Activated B cell treated with CpG ODN at 0.5 μM for 24 hours (primary cell): ENCODE measurements at regions of chr19 and their contacts with region 1.

Region 1: GRCh38 chr19:48993175-48994034 is at the starts of genes GYS1 and RUVBL2:
- DNase-seq: peak; percentile 96
- ATAC-seq: peak; percentile 92
- H3K4me3 Mint-ChIP-seq: peak within 1 kb of the TSS; percentile 97
- H3K27ac Mint-ChIP-seq: peak within 1 kb of the TSS; percentile 97
- H3K4me1 Mint-ChIP-seq: peaks cover 33% of the 10 kb centered on the region
- H3K27me3 Mint-ChIP-seq: no peaks in the 10 kb centered on the region
- CTCF ChIP-seq: peak; percentile 94
- total RNA-seq, gene GYS1: 50.7 and 52.7 TPM in 2 replicates
- total RNA-seq, gene RUVBL2: 75.6 and 79.4 TPM in 2 replicates

Region 2: DNA sequence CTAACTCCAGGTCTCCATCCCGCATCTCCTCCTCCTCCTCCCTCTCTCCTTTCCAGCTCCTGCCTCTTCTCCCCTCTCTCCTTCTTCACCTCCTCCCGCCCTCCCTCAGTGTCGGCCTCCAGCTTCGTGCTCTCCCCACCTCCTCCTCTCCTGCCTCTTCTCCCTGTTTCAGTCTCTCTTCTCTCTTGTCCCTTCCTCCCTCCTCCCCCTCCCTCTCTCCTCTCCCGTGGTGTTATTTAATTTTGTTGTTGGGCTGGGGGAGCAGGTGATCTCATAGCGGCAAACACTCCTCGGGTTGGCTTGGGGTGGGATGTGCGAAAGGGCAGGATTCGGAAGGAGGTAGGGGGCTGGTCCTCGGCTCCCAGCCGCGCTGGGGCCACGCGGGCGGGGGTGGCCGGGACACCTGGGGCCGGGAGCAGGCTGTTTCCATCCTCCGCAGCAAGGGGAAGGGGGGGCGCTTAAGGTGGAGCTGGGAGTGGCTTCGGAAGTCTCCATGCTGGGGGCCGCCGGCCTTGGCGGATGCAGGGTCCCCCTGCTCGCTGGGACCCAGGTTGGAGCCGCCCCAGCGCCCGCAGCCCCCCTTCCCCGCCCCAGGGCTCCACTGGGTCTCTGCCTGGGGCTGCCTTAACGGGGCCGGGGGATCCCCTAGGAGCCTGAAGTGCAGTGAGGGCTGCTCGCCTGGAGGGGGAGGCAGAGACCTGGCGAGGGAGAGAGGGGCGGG is 347.2 kb before region 1 on chr19 and contains the start of gene CA11:
- CTCF ChIA-PET with region 1: no interaction called
- POLR2A ChIA-PET with region 1: interaction called, 4 read pairs
- intact Hi-C with region 1: loop called (anchors 2 kb)
- DNase-seq: peak; percentile 91
- ATAC-seq: peak; percentile 90
- H3K4me3 Mint-ChIP-seq: peak within 1 kb of the TSS; percentile 93
- H3K27ac Mint-ChIP-seq: peak within 1 kb of the TSS; percentile 92
- H3K4me1 Mint-ChIP-seq: peaks cover 50% of the 10 kb centered on the region
- H3K27me3 Mint-ChIP-seq: no peaks in the 10 kb centered on the region
- CTCF ChIP-seq: no peak
- total RNA-seq, gene CA11: 9.5 and 10.3 TPM in 2 replicates

Region 3: DNA sequence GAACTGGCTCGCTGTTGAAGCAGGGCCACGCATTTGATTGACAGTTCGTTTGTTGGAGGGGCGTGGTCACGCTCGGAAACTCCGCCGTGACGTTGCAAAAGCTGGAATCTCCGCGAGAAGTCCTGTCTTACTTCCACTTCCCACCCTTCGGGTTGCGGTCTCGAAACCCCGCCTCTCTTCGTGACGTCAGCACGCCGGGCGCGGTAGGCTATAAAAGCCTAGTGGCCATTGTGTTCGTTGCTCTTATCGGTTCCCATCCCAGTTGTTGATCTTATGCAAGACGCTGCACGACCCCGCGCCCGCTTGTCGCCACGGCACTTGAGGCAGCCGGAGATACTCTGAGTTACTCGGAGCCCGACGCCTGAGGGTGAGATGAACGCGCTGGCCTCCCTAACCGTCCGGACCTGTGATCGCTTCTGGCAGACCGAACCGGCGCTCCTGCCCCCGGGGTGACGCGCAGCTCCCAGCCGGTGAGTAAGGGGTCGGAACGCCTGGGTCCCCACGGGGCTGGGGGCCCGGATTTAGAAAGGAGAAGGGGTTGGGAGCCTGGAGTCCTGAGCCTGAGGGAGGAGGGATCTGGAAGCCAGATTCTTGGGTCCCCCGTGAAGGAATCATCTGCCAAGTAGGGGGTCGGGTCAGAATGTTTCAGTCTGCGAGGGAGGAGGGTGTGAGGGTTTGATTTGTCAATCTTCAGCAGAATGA is 121.1 kb before region 1 on chr19 and contains the start of gene PPP1R15A:
- CTCF ChIA-PET with region 1: no interaction called
- POLR2A ChIA-PET with region 1: interaction called, 51 read pairs
- intact Hi-C with region 1: loop called (anchors 1 kb)
- DNase-seq: peak; percentile 99
- ATAC-seq: peak; percentile 35
- H3K4me3 Mint-ChIP-seq: peak within 1 kb of the TSS; percentile 100
- H3K27ac Mint-ChIP-seq: peak within 1 kb of the TSS; percentile 100
- H3K4me1 Mint-ChIP-seq: peaks cover 42% of the 10 kb centered on the region
- H3K27me3 Mint-ChIP-seq: no peaks in the 10 kb centered on the region
- CTCF ChIP-seq: no peak
- total RNA-seq, gene PPP1R15A: 115 and 123 TPM in 2 replicates

Region 4: DNA sequence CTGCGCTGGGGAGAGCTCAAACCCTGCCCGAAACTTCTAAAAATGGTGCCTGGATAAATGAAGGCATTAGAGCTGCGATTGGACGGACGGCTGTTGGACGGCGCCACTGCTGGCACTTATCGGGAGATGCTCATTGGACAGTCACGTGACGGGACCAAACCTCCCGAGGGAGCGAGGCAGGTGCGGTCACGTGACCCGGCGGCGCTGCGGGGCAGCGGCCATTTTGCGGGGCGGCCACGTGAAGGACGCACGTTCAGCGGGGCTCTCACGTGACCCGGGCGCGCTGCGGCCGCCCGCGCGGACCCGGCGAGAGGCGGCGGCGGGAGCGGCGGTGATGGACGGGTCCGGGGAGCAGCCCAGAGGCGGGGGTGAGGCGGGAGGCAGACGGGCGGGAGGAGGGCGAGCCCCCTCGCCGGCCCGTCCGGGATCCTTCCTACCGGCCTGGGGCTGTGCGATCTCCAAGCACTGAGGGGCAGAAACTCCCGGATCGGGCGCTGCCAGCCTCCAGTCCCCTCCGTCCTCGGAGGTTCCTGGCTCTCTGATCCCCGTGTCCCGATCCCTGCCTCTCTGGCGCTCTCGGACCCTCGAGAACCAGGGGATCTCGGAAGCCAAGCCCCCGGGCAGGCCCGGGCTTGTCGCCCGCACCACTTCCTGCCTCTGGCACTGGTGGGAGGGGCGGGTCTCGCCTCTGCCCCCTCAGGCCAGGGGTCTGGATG is 38.7 kb before region 1 on chr19 and contains the start of gene BAX:
- CTCF ChIA-PET with region 1: no interaction called
- POLR2A ChIA-PET with region 1: interaction called, 7 read pairs
- intact Hi-C with region 1: loop called (anchors 2 kb)
- DNase-seq: peak; percentile 93
- ATAC-seq: peak; percentile 89
- H3K4me3 Mint-ChIP-seq: peak within 1 kb of the TSS; percentile 91
- H3K27ac Mint-ChIP-seq: peak within 1 kb of the TSS; percentile 87
- H3K4me1 Mint-ChIP-seq: peaks cover 26% of the 10 kb centered on the region
- H3K27me3 Mint-ChIP-seq: no peaks in the 10 kb centered on the region
- CTCF ChIP-seq: no peak
- total RNA-seq, gene BAX: 111 and 129 TPM in 2 replicates

Region 5: DNA sequence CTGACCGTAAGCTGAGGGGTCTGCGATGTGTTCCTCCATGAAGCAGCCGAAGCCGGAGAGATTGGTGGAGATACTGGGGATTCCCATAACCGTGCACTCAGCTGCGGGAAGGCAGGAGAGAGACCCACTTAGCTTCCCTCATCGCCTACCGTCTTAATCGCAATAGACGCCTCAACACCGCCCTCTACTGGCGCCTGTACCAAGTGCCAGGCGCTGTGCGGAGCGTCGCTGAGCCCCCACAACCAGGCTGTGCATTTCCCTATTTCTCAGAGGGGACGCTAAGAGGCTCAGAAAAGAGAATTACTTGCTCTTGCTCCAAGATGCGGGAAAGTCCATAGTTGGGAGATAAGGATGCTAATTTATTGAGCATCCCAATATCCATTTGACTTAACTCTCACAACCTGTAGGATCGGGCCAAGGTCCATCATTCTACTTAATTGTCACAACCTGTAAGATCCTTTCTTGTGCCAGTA is 22.4 kb before region 1 on chr19:
- CTCF ChIA-PET with region 1: interaction called, 10 read pairs
- POLR2A ChIA-PET with region 1: interaction called, 29 read pairs
- intact Hi-C with region 1: loop called (anchors 1 kb)
- DNase-seq: peak; percentile 79
- ATAC-seq: peak; percentile 91
- H3K4me3 Mint-ChIP-seq: no peak overlapping the region
- H3K27ac Mint-ChIP-seq: peak overlapping the region; percentile 46
- H3K4me1 Mint-ChIP-seq: peaks cover 30% of the 10 kb centered on the region
- H3K27me3 Mint-ChIP-seq: no peaks in the 10 kb centered on the region
- CTCF ChIP-seq: peak; percentile 97

Region 6: DNA sequence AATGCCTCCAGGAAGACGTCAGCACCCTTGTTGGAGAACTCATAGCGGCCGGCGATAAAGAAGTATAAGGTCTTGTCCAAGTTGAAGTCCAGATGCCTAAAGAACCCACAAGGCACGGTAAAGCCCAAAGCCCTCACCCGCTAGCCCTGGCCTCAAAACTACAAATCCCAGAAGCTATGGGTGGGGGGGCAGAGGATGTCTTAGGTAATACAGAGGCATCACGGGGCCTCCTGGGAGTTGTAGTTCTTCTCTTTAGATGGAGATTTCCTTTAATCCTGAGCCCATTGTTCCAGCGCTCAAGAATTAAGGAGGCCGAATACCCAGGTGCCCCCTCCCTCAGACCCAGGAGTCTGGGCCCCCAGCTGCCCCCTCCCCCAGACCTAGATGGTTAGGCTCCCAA is 11.1 kb before region 1 on chr19:
- CTCF ChIA-PET with region 1: interaction called, 18 read pairs
- POLR2A ChIA-PET with region 1: interaction called, 31 read pairs
- intact Hi-C with region 1: no loop called
- DNase-seq: no peak
- ATAC-seq: no peak
- H3K4me3 Mint-ChIP-seq: no peak overlapping the region
- H3K27ac Mint-ChIP-seq: no peak overlapping the region
- H3K4me1 Mint-ChIP-seq: peaks cover 9% of the 10 kb centered on the region
- H3K27me3 Mint-ChIP-seq: no peaks in the 10 kb centered on the region
- CTCF ChIP-seq: no peak

Region 7: DNA sequence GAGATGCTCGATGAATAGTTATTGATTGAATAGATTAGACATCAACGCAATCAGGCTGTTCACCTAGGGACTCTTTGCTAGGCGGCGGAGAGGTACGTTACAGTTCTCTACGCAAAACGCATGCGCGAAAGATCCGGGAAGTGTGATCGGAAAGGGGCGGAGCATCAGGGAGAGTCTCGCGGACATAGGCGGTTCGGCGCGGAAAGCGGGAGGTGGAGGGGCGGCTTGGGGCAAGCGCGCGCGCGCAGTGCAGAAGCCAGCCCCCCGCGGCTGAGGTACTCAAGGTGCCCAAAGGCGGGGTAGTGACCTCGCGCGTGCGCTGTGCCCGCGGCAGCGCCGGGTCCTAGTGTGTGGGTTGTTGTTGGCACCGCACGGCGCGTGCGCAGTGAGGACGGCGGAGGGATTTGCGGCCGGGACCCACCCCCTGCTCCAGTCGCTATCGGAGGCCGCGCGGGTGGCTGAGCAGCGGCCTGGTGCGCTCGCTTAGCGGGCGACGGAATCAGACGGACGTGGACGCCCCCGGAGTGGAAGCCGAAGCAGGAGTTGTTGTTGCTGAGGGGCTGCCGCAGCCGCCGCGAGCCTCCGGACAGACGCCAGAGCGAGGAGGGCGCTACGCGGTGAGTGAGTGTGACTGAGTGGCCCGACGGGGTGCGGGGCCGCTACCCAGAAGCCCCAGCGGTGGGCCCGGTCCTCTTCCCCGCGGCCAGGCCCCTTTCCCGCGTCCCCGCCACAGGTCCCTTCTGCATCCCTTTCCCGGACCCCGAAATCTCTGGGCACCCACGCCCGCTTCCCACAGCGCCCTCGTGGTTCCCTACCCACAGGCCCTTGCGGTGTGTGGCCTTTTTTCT is 91.8 kb after region 1 on chr19 and contains the start of gene SNRNP70:
- CTCF ChIA-PET with region 1: no interaction called
- POLR2A ChIA-PET with region 1: interaction called, 3 read pairs
- intact Hi-C with region 1: loop called (anchors 1 kb)
- DNase-seq: peak; percentile 99
- ATAC-seq: peak; percentile 97
- H3K4me3 Mint-ChIP-seq: peak within 1 kb of the TSS; percentile 93
- H3K27ac Mint-ChIP-seq: peak within 1 kb of the TSS; percentile 93
- H3K4me1 Mint-ChIP-seq: peaks cover 41% of the 10 kb centered on the region
- H3K27me3 Mint-ChIP-seq: peaks cover 6% of the 10 kb centered on the region
- CTCF ChIP-seq: no peak
- total RNA-seq, gene SNRNP70: 268 and 298 TPM in 2 replicates

Region 8: DNA sequence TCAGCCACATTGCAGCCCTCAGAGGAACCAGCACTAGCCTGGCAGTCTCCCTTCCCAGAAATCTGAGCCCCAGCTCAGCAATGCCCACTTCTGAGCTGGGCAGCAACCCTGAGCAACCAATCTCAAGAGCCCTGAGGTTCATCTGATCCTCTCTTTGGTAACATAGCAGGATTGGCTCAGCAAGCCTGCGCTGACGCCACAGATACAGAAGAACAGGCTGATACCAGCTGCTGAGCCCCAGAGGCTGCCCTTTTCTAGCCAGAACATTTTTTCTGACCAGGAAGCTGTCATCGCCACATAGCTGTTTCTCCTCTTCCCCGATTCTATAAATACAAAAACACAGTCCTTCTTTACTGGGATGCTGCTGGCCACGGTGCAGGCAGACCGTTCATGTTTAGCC is 224.0 kb after region 1 on chr19:
- CTCF ChIA-PET with region 1: no interaction called
- POLR2A ChIA-PET with region 1: no interaction called
- intact Hi-C with region 1: no loop called
- DNase-seq: no peak
- ATAC-seq: no peak
- H3K4me3 Mint-ChIP-seq: no peak overlapping the region
- H3K27ac Mint-ChIP-seq: no peak overlapping the region
- H3K4me1 Mint-ChIP-seq: no peaks in the 10 kb centered on the region
- H3K27me3 Mint-ChIP-seq: no peaks in the 10 kb centered on the region
- CTCF ChIP-seq: no peak